Heart left ventricle (tissue), 16 donors: ENCODE measurements at regions of chr1 and their contacts with region 1.

Region 1: GRCh38 chr1:234722904-234723720 is 113.1 kb upstream of the IRF2BP2 start:
- DNase-seq: peak in 4 of 5 donors; percentile 66 to 79 (median 72)
- ATAC-seq: peak; percentile 6 to 39 (median 16)
- H3K4me3 ChIP-seq: peak overlapping the region in 7 of 12 donors; percentile 5 to 37 (median 26)
- H3K27ac ChIP-seq: peak overlapping the region; percentile 93 to 99 (median 99)
- H3K4me1 ChIP-seq: peaks cover 41 to 98% (median 92%) of the 10 kb centered on the region in 12 donors
- H3K27me3 ChIP-seq: no peaks in the 10 kb centered on the region
- CTCF ChIP-seq: no peak
- POLR2A ChIP-seq: no peak

Region 2: GRCh38 chr1:234772345-234773147 is 49.4 kb after region 1 on chr1:
- intact Hi-C with region 1: loop called in 2 of 10 experiments (anchors 5 kb)
- DNase-seq: peak; percentile 48 to 84 (median 61)
- ATAC-seq: peak; percentile 38 to 88 (median 80)
- H3K4me3 ChIP-seq: peak overlapping the region in 4 of 12 donors; percentile 15 to 25 (median 20)
- H3K27ac ChIP-seq: peak overlapping the region in 8 of 12 donors; percentile 4 to 92 (median 39)
- H3K4me1 ChIP-seq: peaks cover 0 to 66% (median 13%) of the 10 kb centered on the region in 12 donors
- H3K27me3 ChIP-seq: peaks cover 0 to 13% (median 7%) of the 10 kb centered on the region in 9 donors
- CTCF ChIP-seq: no peak
- POLR2A ChIP-seq: no peak

Region 3: GRCh38 chr1:234875953-234876855 is 153.1 kb after region 1 on chr1:
- intact Hi-C with region 1: loop called in 4 of 10 experiments (anchors 5 to 10 kb)
- DNase-seq: no peak
- ATAC-seq: peak in 3 of 4 donors; percentile 48 to 75 (median 60)
- H3K4me3 ChIP-seq: no peak overlapping the region
- H3K27ac ChIP-seq: peak overlapping the region in 9 of 12 donors; percentile 21 to 73 (median 39)
- H3K4me1 ChIP-seq: peaks cover 0 to 49% (median 10%) of the 10 kb centered on the region in 12 donors
- H3K27me3 ChIP-seq: no peaks in the 10 kb centered on the region
- CTCF ChIP-seq: no peak
- POLR2A ChIP-seq: no peak

Region 4: GRCh38 chr1:234887016-234887900 is 164.1 kb after region 1 on chr1:
- intact Hi-C with region 1: loop called in 6 of 10 experiments (anchors 1 to 10 kb)
- DNase-seq: peak in 4 of 5 donors; percentile 65 to 84 (median 74)
- ATAC-seq: peak; percentile 74 to 87 (median 78)
- H3K4me3 ChIP-seq: peak overlapping the region in 2 of 12 donors; percentile 1 to 6
- H3K27ac ChIP-seq: peak overlapping the region; percentile 85 to 97 (median 94)
- H3K4me1 ChIP-seq: peaks cover 0 to 43% (median 26%) of the 10 kb centered on the region in 12 donors
- H3K27me3 ChIP-seq: no peaks in the 10 kb centered on the region
- CTCF ChIP-seq: no peak
- POLR2A ChIP-seq: no peak

Region 5: DNA sequence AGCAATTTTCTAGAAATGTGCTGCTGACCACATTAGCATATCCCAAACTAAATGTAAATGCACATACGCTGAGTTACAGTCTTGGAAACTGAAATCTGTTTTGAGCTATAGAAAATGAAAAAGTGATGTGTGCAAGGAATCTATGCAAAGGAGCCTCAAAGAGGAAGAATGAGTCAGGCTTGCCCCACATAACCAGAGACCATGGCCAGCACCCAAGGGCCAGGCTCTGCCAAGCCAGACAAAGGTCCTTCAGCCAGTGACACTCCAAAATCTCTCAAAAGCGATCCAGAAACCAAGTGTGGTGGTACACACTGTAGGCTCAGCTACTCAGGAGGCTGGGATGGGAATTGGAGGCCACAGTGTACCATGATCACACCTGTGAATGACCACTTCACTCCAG is 210.4 kb after region 1 on chr1:
- intact Hi-C with region 1: no loop called
- DNase-seq: peak in 4 of 5 donors; percentile 52 to 78 (median 70)
- ATAC-seq: peak; percentile 74 to 90 (median 83)
- H3K4me3 ChIP-seq: no peak overlapping the region
- H3K27ac ChIP-seq: peak overlapping the region in 11 of 12 donors; percentile 27 to 84 (median 53)
- H3K4me1 ChIP-seq: peaks cover 0 to 45% (median 13%) of the 10 kb centered on the region in 12 donors
- H3K27me3 ChIP-seq: no peaks in the 10 kb centered on the region
- CTCF ChIP-seq: no peak
- POLR2A ChIP-seq: no peak

Region 6: DNA sequence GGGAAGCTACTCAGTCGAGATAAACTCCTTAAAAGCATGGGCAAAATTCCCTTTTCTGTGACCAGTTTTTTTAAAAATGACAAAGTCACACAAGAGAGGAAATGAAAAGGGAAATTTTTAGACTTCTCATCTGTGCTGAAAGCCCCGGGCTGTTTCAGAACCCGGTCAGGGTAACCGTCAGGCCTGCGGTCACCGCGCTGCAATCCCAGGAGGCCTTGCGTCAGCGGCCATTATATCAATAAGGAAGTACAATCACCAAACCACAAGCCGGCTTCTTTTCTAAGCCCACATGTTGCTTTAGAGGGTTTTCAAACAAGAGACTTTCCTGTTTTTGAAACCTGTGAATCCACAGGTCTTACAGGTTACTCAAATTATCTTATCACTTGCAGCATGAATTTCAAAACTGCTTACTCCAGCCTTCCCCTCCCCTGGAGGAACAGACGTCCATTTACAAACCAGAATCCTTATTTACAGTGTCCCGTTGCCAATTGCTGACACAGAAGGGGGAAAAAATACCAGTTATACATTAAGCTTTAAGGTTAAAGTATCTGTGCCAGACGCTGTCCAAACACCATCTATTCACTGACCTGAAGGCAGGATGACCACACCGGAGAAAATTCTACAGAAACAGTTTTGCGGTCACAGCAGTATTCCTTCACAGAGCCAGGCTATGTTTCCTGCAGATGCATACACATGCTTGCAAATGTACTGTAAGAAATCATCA is 240.2 kb after region 1 on chr1:
- intact Hi-C with region 1: loop called in 3 of 10 experiments (anchors 10 kb)
- DNase-seq: peak; percentile 81 to 91 (median 86)
- ATAC-seq: peak; percentile 48 to 78 (median 68)
- H3K4me3 ChIP-seq: peak overlapping the region in 3 of 12 donors; percentile 5 to 32 (median 23)
- H3K27ac ChIP-seq: peak overlapping the region; percentile 24 to 99 (median 72)
- H3K4me1 ChIP-seq: peaks cover 9 to 74% (median 45%) of the 10 kb centered on the region in 12 donors
- H3K27me3 ChIP-seq: no peaks in the 10 kb centered on the region
- CTCF ChIP-seq: no peak
- POLR2A ChIP-seq: no peak

Region 7: DNA sequence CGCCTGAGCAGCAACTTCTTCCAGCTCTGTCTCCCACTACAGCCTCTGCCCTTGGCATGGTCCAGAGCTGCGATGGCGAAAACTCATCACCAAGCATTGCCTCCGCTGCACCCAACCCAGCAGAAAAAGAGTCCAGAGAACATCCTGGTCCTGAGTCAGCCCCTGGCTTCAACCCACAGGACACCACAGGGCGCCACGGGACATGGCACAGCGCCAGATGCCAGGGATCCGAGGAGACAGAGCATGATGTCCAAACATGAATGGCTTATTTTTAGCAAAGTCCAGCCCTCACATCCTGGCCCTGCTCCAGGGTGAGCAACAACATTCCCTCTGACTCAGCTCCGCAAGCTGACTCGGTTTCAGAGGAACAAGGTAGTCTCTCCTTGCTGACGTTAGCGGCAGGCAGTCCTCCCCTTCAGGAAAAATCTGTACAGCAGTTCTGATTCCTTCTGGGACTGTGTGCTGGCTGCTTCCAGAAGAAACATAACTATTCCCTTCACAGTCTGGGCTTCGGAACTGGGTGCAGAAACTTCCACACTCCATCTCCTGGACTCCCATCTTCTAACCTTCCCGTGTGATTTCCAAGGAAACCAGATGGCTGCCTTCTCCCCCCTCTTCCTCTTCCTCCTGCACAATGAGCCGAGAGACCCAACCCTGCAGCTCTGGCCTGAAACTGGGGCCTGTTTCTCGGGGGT is 274.2 kb after region 1 on chr1:
- intact Hi-C with region 1: loop called in 4 of 10 experiments (anchors 1 to 10 kb)
- DNase-seq: peak; percentile 95 to 100 (median 98)
- ATAC-seq: peak; percentile 94 to 96 (median 96)
- H3K4me3 ChIP-seq: peak overlapping the region in 7 of 12 donors; percentile 6 to 28 (median 18)
- H3K27ac ChIP-seq: peak overlapping the region; percentile 88 to 98 (median 93)
- H3K4me1 ChIP-seq: peaks cover 8 to 32% (median 26%) of the 10 kb centered on the region in 12 donors
- H3K27me3 ChIP-seq: no peaks in the 10 kb centered on the region
- CTCF ChIP-seq: peak in 1 of 12 donors; percentile 18
- POLR2A ChIP-seq: peak in 1 of 2 donors; percentile 62

Region 8: GRCh38 chr1:235043234-235043633 is 320.1 kb after region 1 on chr1:
- intact Hi-C with region 1: no loop called
- DNase-seq: no peak
- ATAC-seq: no peak
- H3K4me3 ChIP-seq: no peak overlapping the region
- H3K27ac ChIP-seq: no peak overlapping the region
- H3K4me1 ChIP-seq: peaks cover 5 to 37% (median 13%) of the 10 kb centered on the region in 12 donors
- H3K27me3 ChIP-seq: no peaks in the 10 kb centered on the region
- CTCF ChIP-seq: no peak
- POLR2A ChIP-seq: no peak